Activated CD4-positive, alpha-beta memory T cell treated with anti-CD3 and anti-CD28 coated beads for 36 hours (primary cell): ENCODE measurements at regions of chr15 and their contacts with region 1.

Region 1: DNA sequence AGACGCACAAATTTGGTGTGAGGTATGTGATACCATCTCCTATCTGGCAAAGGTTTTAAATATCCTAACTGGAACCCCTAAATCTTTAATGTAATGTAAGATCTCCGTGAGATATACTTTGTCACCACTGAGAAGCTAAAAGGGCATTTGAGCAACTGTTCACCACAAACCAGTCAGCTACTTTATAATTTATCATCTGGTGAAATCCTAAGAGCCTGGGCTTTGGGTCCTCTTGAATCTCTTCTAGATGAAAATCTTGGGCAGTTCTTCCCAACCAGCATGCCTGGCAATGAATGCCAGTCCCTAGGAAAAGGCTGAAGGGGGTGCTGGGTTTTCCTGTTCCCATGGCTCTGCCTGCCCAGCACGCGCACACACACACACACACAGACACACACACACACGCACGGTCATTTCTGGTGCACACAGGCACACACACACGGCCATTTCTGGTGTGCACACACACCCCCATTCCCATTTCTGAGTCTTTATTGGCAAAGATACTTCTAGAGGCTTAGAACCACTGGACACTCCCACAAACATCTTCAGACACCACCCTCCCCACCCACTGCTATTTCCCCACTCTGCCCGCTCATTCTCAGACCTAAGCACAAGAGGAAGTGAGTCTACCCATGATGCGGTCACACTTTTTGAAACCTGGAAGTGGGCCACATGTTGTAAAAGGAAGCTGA is 72.6 kb downstream of the MYO1E start:
- DNase-seq: peak; percentile 85
- H3K4me3 Mint-ChIP-seq: peak overlapping the region; percentile 42
- H3K27ac Mint-ChIP-seq: peak overlapping the region; percentile 28
- H3K4me1 Mint-ChIP-seq: peaks cover 39% of the 10 kb centered on the region
- H3K27me3 Mint-ChIP-seq: peaks cover 5% of the 10 kb centered on the region

Region 2: GRCh38 chr15:58761010-58761388 is 539.1 kb before region 1 on chr15:
- CTCF ChIA-PET with region 1: no interaction called
- POLR2A ChIA-PET with region 1: no interaction called
- intact Hi-C with region 1: no loop called
- DNase-seq: peak; percentile 36
- H3K4me3 Mint-ChIP-seq: no peak overlapping the region
- H3K27ac Mint-ChIP-seq: no peak overlapping the region
- H3K4me1 Mint-ChIP-seq: no peaks in the 10 kb centered on the region
- H3K27me3 Mint-ChIP-seq: peaks cover 3% of the 10 kb centered on the region

Region 3: GRCh38 chr15:59255647-59256380 is 44.3 kb before region 1 on chr15:
- CTCF ChIA-PET with region 1: no interaction called
- POLR2A ChIA-PET with region 1: interaction called, 4 read pairs
- intact Hi-C with region 1: loop called (anchors 2 kb)
- DNase-seq: peak; percentile 37
- H3K4me3 Mint-ChIP-seq: no peak overlapping the region
- H3K27ac Mint-ChIP-seq: no peak overlapping the region
- H3K4me1 Mint-ChIP-seq: peaks cover 20% of the 10 kb centered on the region
- H3K27me3 Mint-ChIP-seq: no peaks in the 10 kb centered on the region

Region 4: GRCh38 chr15:59349680-59350420 is 49.8 kb after region 1 on chr15:
- CTCF ChIA-PET with region 1: no interaction called
- POLR2A ChIA-PET with region 1: no interaction called
- intact Hi-C with region 1: loop called (anchors 1 kb)
- DNase-seq: peak; percentile 53
- H3K4me3 Mint-ChIP-seq: no peak overlapping the region
- H3K27ac Mint-ChIP-seq: no peak overlapping the region
- H3K4me1 Mint-ChIP-seq: peaks cover 11% of the 10 kb centered on the region
- H3K27me3 Mint-ChIP-seq: peaks cover 12% of the 10 kb centered on the region

Region 5: GRCh38 chr15:59371458-59372351 is 71.6 kb after region 1 on chr15:
- CTCF ChIA-PET with region 1: no interaction called
- POLR2A ChIA-PET with region 1: no interaction called
- intact Hi-C with region 1: loop called (anchors 2 kb)
- DNase-seq: no peak
- H3K4me3 Mint-ChIP-seq: peak overlapping the region; percentile 79
- H3K27ac Mint-ChIP-seq: no peak overlapping the region
- H3K4me1 Mint-ChIP-seq: peaks cover 18% of the 10 kb centered on the region
- H3K27me3 Mint-ChIP-seq: peaks cover 40% of the 10 kb centered on the region